ENCODE measurements at regions of chr11 and their contacts with region 1.

Region 1: DNA sequence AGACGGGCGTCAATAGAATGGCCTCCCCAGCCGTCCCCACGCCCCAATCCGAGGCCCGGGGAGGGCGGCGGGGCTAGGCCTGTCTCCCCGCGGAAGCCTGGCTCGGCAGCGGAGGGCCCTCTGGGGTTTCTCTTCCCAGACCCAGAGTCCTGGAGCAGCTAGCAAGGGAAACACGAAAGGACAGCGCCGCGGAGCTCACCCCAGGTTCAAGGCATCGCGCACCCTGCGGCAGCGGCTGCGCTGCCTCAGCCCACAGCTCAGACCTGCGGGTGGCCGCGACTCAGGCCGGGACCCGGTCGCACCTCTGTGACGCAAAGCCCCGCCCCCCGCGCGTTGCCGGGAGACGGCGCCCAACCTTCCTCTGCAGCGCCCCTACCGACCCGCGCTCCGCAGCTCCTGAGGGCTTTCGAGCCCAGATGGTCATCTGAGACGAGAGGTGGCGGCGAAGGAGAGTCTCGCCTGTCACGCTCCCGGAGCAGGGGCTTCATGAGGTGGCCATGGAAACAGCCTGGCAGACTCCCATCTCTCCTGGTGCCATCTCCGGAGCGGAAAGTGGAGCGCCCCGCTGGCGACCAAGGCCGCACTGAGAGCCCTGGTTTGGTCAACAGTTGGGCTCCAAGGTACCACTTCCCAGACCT is at the start of gene RNF141:
- DNase-seq: peak; percentile 96
- ATAC-seq: peak; percentile 86
- H3K4me3 ChIP-seq: peak within 1 kb of the TSS; percentile 73 to 93 (median 78)
- H3K4me3 Mint-ChIP-seq: peak within 1 kb of the TSS; percentile 95
- H3K27ac ChIP-seq: peak within 1 kb of the TSS; percentile 83 to 92
- H3K27ac Mint-ChIP-seq: peak within 1 kb of the TSS; percentile 98
- H3K4me1 ChIP-seq: peaks cover 59 to 62% of the 10 kb centered on the region in 2 donors
- H3K4me1 Mint-ChIP-seq: peaks cover 79% of the 10 kb centered on the region
- H3K27me3 ChIP-seq: no peaks in the 10 kb centered on the region
- H3K27me3 Mint-ChIP-seq: no peaks in the 10 kb centered on the region
- CTCF ChIP-seq: peak; percentile 91
- total RNA-seq, gene RNF141: 48.2 and 49.1 TPM in 2 replicates

Region 2: DNA sequence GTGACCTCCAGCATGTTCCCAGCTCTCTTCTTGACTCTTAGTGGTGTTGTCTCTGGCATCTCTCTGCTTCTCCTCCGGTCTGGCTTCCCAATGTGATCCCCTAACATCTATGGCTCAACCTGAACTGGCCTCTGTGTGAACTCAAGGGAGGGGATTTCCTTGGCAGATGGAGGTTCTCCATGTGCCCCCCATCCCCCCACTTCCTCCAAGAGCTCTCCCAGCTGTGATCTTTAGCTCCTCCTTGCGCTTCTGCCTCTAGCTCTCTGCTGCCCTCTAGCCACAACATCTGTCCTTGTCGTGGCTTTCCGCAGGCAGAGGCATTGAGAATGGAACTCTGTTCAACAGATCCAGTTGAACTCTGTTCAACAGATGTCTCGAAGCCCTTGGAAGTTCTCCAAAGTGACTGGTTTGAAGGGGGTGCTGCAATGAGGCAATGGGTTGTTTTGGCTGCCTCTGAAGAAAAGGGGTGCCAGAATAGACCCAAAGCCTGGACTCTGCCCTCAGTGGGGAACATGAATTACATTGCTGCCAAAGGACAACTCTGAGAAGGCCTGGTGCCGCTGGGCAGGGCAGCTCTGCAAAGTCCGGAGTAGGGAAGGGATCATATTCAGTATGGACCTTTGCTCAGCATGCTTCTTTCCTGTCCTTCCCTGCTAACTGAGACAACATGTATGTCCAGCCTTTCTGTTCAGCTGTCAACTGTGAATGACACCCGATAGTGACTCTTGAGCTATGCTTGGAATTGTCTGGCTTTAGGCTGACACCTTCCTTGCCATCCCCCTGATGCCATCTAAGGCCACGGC is 174.3 kb before region 1 on chr11:
- CTCF ChIA-PET with region 1: no interaction called
- POLR2A ChIA-PET with region 1: no interaction called
- intact Hi-C with region 1: no loop called
- DNase-seq: peak; percentile 80
- ATAC-seq: peak; percentile 87
- H3K4me3 ChIP-seq: no peak overlapping the region
- H3K4me3 Mint-ChIP-seq: peak overlapping the region; percentile 48
- H3K27ac ChIP-seq: no peak overlapping the region
- H3K27ac Mint-ChIP-seq: no peak overlapping the region
- H3K4me1 ChIP-seq: peaks cover 5 to 8% of the 10 kb centered on the region in 2 donors
- H3K4me1 Mint-ChIP-seq: peaks cover 5% of the 10 kb centered on the region
- H3K27me3 ChIP-seq: no peaks in the 10 kb centered on the region
- H3K27me3 Mint-ChIP-seq: peaks cover 32% of the 10 kb centered on the region
- CTCF ChIP-seq: peak; percentile 81

Region 3: DNA sequence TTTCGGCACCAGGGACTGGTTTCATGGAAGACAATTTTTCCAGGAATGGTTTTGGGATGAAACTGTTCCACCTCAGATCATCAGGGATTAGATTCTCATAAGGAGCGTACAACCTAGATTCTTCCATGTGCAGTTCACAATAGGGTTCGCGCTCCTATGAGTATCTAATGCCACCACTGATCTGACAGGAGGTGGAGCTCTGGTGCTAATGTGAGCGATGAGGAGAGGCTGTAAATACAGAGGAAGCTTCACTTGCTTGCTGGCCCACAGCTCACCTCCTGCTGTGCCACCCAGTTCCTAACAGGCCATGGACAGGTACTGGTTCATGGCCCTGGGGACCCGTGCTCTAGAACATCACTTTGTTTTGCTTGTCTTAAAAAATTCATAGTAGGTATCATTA is 127.8 kb before region 1 on chr11:
- CTCF ChIA-PET with region 1: interaction called, 39 read pairs
- POLR2A ChIA-PET with region 1: interaction called, 9 read pairs
- intact Hi-C with region 1: no loop called
- DNase-seq: peak; percentile 83
- ATAC-seq: peak; percentile 88
- H3K4me3 ChIP-seq: no peak overlapping the region
- H3K4me3 Mint-ChIP-seq: no peak overlapping the region
- H3K27ac ChIP-seq: no peak overlapping the region
- H3K27ac Mint-ChIP-seq: no peak overlapping the region
- H3K4me1 ChIP-seq: peaks cover 19 to 26% of the 10 kb centered on the region in 2 donors
- H3K4me1 Mint-ChIP-seq: peaks cover 26% of the 10 kb centered on the region
- H3K27me3 ChIP-seq: no peaks in the 10 kb centered on the region
- H3K27me3 Mint-ChIP-seq: no peaks in the 10 kb centered on the region
- CTCF ChIP-seq: peak; percentile 59

Region 4: GRCh38 chr11:10502770-10503169 is 38.3 kb before region 1 on chr11:
- CTCF ChIA-PET with region 1: interaction called, 5 read pairs
- POLR2A ChIA-PET with region 1: no interaction called
- intact Hi-C with region 1: loop called (anchors 5 kb)
- DNase-seq: peak; percentile 46
- ATAC-seq: peak; percentile 51
- H3K4me3 ChIP-seq: peak overlapping the region in 1 of 5 experiments; percentile 18
- H3K4me3 Mint-ChIP-seq: peak overlapping the region; percentile 20
- H3K27ac ChIP-seq: peak overlapping the region; percentile 38 to 65
- H3K27ac Mint-ChIP-seq: peak overlapping the region; percentile 81
- H3K4me1 ChIP-seq: peaks cover 21% of the 10 kb centered on the region in 2 donors
- H3K4me1 Mint-ChIP-seq: peaks cover 27% of the 10 kb centered on the region
- H3K27me3 ChIP-seq: no peaks in the 10 kb centered on the region
- H3K27me3 Mint-ChIP-seq: no peaks in the 10 kb centered on the region
- CTCF ChIP-seq: no peak

Region 5: DNA sequence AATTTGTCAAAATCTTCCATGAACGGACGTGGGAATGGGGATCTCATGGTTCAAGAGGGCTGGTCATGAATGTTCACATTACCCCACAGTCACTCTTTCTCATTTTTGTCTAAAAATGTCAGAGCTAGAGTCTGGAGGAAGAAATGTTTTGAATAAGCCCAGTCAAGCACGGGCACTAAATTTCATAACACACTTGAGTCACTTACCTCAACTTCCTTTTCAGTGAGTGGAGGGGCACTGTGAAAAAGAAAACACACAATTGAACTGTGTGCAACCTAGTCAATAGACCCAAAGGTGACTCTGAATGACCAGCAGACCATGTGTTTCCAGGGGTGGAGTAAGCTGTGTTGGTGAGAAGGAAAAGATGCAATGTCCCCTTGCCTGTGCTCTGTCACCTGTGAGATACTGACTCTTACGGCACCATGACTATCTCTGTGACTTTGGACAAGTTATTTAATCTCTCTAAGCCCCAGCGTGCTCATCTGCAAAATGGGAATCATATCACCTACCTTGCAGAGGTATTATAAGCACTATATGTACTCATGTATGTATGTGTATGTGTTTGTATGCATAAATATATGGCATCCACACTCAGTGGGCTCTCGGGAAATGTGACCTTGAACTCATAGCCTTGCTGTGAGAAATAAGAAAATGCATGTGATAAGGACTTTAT is 65.6 kb after region 1 on chr11:
- CTCF ChIA-PET with region 1: interaction called, 45 read pairs
- POLR2A ChIA-PET with region 1: interaction called, 12 read pairs
- intact Hi-C with region 1: loop called (anchors 1 kb)
- DNase-seq: peak; percentile 68
- ATAC-seq: peak; percentile 82
- H3K4me3 ChIP-seq: peak overlapping the region in 4 of 5 experiments; percentile 33 to 74 (median 50)
- H3K4me3 Mint-ChIP-seq: peak overlapping the region; percentile 83
- H3K27ac ChIP-seq: peak overlapping the region; percentile 84 to 91
- H3K27ac Mint-ChIP-seq: peak overlapping the region; percentile 97
- H3K4me1 ChIP-seq: peaks cover 90 to 97% of the 10 kb centered on the region in 2 donors
- H3K4me1 Mint-ChIP-seq: peaks cover 98% of the 10 kb centered on the region
- H3K27me3 ChIP-seq: no peaks in the 10 kb centered on the region
- H3K27me3 Mint-ChIP-seq: no peaks in the 10 kb centered on the region
- CTCF ChIP-seq: no peak

Region 6: DNA sequence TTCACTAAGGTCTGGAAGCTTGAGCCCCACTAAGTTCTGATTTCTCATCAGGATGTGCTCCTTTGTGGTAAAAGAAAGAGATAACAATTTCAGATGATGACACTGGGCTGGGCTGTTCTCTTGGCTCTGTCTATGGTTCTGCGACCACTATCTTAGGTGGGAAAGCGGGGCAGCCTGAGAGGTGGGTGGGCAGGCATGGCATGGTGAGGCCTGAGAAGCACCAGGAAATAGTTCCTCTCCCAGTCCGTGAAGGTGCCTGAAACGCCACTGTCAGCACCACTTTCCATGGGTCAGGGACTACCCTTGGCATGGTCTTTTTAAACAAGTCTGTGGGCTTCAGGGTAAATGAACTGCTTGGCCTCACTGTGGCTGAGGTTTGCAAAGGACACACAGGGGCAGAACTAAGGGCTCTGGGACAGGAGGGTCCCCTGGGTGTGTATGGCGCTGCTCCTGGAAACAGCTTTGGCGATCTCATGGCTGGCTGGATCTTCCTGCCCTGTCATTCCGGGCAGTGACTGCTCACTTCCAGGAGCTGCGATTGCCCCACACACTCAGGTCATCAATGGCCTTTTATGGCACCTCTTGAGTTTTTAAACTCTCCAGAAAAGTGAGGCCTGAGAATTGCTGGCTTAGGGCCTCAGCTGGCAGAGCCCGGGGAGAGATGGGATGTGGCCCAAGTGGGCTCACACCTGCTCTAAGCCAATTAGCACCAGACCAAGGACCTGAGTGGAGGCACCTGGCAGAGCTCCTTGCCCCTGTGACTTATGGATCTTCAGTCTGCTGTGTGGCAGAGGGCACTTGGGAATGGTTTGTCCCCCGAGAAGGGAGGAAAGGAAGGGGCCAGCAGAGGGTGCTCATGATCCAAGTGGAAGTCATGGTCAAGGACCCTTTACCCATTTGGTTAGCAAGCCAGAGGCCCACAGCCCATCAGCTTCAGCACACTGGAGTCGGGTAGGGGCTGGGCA is 83.0 kb after region 1 on chr11:
- CTCF ChIA-PET with region 1: interaction called, 19 read pairs
- POLR2A ChIA-PET with region 1: interaction called, 3 read pairs
- intact Hi-C with region 1: loop called (anchors 5 kb)
- DNase-seq: no peak
- ATAC-seq: no peak
- H3K4me3 ChIP-seq: no peak overlapping the region
- H3K4me3 Mint-ChIP-seq: peak overlapping the region; percentile 53
- H3K27ac ChIP-seq: peak overlapping the region; percentile 79 to 88
- H3K27ac Mint-ChIP-seq: peak overlapping the region; percentile 98
- H3K4me1 ChIP-seq: peaks cover 47 to 69% of the 10 kb centered on the region in 2 donors
- H3K4me1 Mint-ChIP-seq: peaks cover 77% of the 10 kb centered on the region
- H3K27me3 ChIP-seq: no peaks in the 10 kb centered on the region
- H3K27me3 Mint-ChIP-seq: no peaks in the 10 kb centered on the region
- CTCF ChIP-seq: no peak

Region 7: GRCh38 chr11:10735481-10736475 is 194.7 kb after region 1 on chr11:
- CTCF ChIA-PET with region 1: interaction called, 15 read pairs
- POLR2A ChIA-PET with region 1: no interaction called
- intact Hi-C with region 1: loop called (anchors 1 kb)
- DNase-seq: peak; percentile 92
- ATAC-seq: peak; percentile 100
- H3K4me3 ChIP-seq: peak overlapping the region in 2 of 5 experiments; percentile 25 to 28
- H3K4me3 Mint-ChIP-seq: peak overlapping the region; percentile 86
- H3K27ac ChIP-seq: peak overlapping the region; percentile 22 to 35
- H3K27ac Mint-ChIP-seq: peak overlapping the region; percentile 95
- H3K4me1 ChIP-seq: peaks cover 7 to 13% of the 10 kb centered on the region in 2 donors
- H3K4me1 Mint-ChIP-seq: peaks cover 13% of the 10 kb centered on the region
- H3K27me3 ChIP-seq: no peaks in the 10 kb centered on the region
- H3K27me3 Mint-ChIP-seq: no peaks in the 10 kb centered on the region
- CTCF ChIP-seq: peak; percentile 94

Measured in B cell (primary cell).